CD8-positive, alpha-beta T cell (primary cell): ENCODE measurements at regions of chr16 and their contacts with region 1.

Region 1: DNA sequence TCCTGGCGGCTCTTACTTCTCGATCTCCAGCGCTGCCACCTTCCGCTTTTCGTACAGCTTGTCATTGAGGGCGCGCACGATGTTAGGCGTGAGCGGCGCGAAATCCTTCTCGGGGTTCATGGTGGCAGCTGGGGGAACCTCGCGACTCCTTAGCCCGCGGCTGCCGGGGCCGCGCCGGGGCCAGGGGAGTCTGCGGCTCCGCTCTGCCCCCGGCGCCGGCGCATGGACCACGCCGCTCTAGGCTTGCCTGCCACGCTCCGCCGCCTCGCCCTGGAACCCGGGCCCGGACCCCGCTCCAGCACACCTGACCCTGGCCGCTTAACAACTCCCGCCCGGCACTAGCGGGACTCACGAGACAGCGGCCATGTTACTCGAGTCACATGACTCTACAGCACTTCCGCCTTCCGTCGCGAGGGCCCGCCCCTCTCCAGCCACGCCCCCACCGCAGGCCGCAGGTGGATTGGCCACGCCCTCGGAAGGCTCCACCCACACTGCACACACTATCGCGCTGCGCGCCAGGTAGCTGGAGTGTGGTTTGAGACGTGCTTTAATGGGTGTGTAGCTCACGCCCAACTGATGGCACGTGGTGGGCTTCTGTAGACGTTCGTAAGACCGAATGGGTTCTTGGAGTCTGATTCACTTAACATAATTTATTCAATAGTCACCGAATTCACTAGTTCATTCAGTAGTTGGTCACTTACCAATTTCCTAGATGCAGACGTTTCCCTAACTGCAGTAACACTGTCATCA is at the start of gene VAC14:
- DNase-seq: peak; percentile 95 to 99 (median 97)
- ATAC-seq: peak; percentile 99
- H3K4me3 ChIP-seq: peak within 1 kb of the TSS; percentile 63 to 65
- H3K4me3 Mint-ChIP-seq: peak within 1 kb of the TSS; percentile 95
- H3K27ac ChIP-seq: peak within 1 kb of the TSS; percentile 52 to 57
- H3K27ac Mint-ChIP-seq: peak within 1 kb of the TSS; percentile 97
- H3K4me1 ChIP-seq: peaks cover 12% of the 10 kb centered on the region
- H3K4me1 Mint-ChIP-seq: peaks cover 39% of the 10 kb centered on the region
- H3K27me3 ChIP-seq: no peaks in the 10 kb centered on the region
- H3K27me3 Mint-ChIP-seq: no peaks in the 10 kb centered on the region
- CTCF ChIP-seq: no peak
- total RNA-seq, gene VAC14: 27.1 to 27.2 TPM

Region 2: GRCh38 chr16:71288890-71289733 is 488.2 kb after region 1 on chr16 and contains the start of gene CMTR2:
- CTCF ChIA-PET with region 1: no interaction called
- POLR2A ChIA-PET with region 1: no interaction called
- intact Hi-C with region 1: loop called (anchors 5 to 10 kb)
- DNase-seq: peak; percentile 71 to 95 (median 87)
- ATAC-seq: peak; percentile 91
- H3K4me3 ChIP-seq: peak within 1 kb of the TSS; percentile 72 to 91
- H3K4me3 Mint-ChIP-seq: peak within 1 kb of the TSS; percentile 87
- H3K27ac ChIP-seq: peak within 1 kb of the TSS; percentile 75 to 85
- H3K27ac Mint-ChIP-seq: peak within 1 kb of the TSS; percentile 80
- H3K4me1 ChIP-seq: peaks cover 11% of the 10 kb centered on the region
- H3K4me1 Mint-ChIP-seq: peaks cover 26% of the 10 kb centered on the region
- H3K27me3 ChIP-seq: no peaks in the 10 kb centered on the region
- H3K27me3 Mint-ChIP-seq: peaks cover 14% of the 10 kb centered on the region
- CTCF ChIP-seq: no peak
- total RNA-seq, gene CMTR2: 7.7 to 9.2 TPM

Region 3: DNA sequence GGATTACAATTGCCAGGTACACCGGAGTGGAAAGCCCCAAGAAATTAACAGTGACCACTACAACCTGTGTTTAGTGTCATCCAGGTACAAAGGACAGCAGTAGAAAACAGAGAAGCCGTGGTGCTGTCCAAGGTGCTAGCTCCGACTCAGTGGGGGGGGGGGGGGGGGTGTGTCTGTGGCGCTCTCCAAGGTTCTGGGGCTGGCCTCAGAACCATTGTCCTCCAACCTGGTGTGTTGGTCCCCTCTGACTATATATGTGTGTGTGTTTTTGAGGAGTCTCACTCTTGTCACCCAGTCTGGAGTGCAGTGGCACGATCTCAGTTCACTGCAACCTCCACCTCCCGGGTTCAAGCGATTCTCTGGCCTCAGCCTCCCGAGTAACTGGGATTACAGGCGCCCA is 666.9 kb after region 1 on chr16:
- CTCF ChIA-PET with region 1: no interaction called
- POLR2A ChIA-PET with region 1: no interaction called
- intact Hi-C with region 1: loop called in 1 of 2 experiments (anchors 5 kb)
- DNase-seq: peak in 8 of 9 experiments; percentile 18 to 68 (median 46)
- ATAC-seq: peak; percentile 92
- H3K4me3 ChIP-seq: no peak overlapping the region
- H3K4me3 Mint-ChIP-seq: no peak overlapping the region
- H3K27ac ChIP-seq: no peak overlapping the region
- H3K27ac Mint-ChIP-seq: no peak overlapping the region
- H3K4me1 ChIP-seq: peaks cover under 1% of the 10 kb centered on the region
- H3K4me1 Mint-ChIP-seq: peaks cover 5% of the 10 kb centered on the region
- H3K27me3 ChIP-seq: no peaks in the 10 kb centered on the region
- H3K27me3 Mint-ChIP-seq: no peaks in the 10 kb centered on the region
- CTCF ChIP-seq: no peak